K562 (cell line): ENCODE measurements at regions of chr13 and their contacts with region 1.

Region 1: DNA sequence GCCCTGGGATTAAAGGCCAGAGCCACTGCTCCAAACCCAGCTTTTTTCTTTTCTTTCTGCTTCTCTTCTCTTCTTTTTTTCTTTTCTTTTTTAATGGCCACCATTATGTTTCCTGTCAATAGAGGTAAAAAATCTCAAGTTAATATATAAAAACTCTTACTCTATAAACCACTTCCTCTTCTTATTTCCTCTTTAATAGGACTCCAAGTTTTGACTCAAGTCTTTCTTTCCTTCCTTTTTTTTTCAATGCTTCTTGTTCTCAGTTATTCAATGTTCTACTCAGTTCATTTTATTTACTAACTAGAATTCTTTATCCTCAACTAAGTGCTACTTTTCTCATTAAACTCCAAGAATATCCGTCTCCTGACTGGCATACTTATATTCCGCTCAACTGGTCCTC is 27.1 kb upstream of the MYCBP2 start:
- DNase-seq: no peak
- ATAC-seq: no peak
- H3K4me3 ChIP-seq: no peak overlapping the region
- H3K27ac ChIP-seq: no peak overlapping the region
- H3K4me1 ChIP-seq: no peaks in the 10 kb centered on the region
- H3K27me3 ChIP-seq: no peaks in the 10 kb centered on the region; a peak in 1 of 5 replicates
- CTCF ChIP-seq: no peak
- EP300 ChIP-seq: no peak
- POLR2A ChIP-seq: no peak
- RAD21 ChIP-seq: no peak

Region 2: DNA sequence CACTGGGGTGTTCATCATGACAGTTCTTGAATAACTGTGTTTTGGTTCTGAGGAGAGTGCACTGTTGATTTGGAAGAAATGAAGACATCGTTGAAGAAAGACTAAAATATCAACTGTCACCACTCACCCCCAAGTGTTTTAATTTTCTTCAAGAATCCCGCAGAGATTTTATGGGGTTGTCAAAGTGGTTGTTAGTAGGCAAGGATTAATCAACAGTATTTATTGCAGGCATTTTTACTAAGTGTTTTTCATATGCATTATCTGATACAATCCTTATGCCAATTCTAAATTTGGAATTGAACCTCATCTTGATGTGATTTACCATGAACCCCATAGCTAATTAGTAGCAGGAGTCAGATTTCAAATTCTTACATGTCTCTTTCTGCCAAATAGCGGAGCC is 1368.7 kb after region 1 on chr13:
- CTCF ChIA-PET with region 1: no interaction called
- POLR2A ChIA-PET with region 1: no interaction called
- in situ Hi-C with region 1: loop called (anchors 10 kb)
- intact Hi-C with region 1: no loop called
- DNase-seq: no peak
- ATAC-seq: no peak
- H3K4me3 ChIP-seq: no peak overlapping the region
- H3K27ac ChIP-seq: no peak overlapping the region
- H3K4me1 ChIP-seq: no peaks in the 10 kb centered on the region
- H3K27me3 ChIP-seq: no peaks in the 10 kb centered on the region
- CTCF ChIP-seq: no peak
- EP300 ChIP-seq: no peak
- POLR2A ChIP-seq: no peak
- RAD21 ChIP-seq: no peak